Thyroid gland (tissue), 4 donors: ENCODE measurements at regions of chr2 and their contacts with region 1.

Region 1: GRCh38 chr2:69012310-69013141 is 453 bp upstream of the ANTXR1 start:
- DNase-seq: peak; percentile 65 to 75
- H3K4me3 ChIP-seq: peak overlapping the region; percentile 59 to 90 (median 82)
- H3K27ac ChIP-seq: peak overlapping the region in 2 of 3 donors; percentile 43 to 75
- H3K4me1 ChIP-seq: peaks cover 17 to 23% of the 10 kb centered on the region in 2 donors
- H3K27me3 ChIP-seq: no peaks in the 10 kb centered on the region
- CTCF ChIP-seq: peak; percentile 41 to 81 (median 68)
- POLR2A ChIP-seq: no peak

Region 2: DNA sequence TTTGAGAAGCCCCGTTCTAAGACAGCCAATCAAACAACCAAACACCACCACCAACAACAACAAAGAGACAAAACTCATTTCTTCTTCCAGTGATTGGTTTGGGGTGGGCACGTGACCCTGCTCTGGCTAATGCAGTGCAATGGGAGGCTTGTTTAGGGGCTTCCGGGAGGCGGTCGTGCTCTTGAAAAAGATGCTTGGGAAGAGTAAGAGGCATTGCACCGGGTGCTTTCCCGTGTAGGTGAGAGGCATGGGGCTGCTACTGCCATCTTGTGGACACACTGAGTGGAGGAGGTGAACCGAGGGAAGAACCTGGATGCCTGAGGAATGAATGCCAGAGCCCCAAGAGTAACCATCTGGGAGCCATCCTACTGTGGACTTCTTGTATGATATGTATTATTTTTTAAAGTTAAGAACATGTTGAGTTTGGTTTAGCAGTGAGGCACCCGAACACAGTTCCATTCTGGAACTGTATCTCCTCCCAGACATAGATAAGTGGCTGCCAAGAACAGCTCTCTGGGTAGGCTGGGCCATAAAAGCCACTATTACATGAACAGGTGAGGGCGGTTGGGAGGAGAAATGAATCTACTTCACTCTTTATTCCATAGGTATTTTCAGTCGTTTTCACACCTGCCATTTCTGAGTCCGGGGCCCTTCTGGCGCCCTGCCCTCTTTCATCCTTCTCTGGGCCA is 297.0 kb before region 1 on chr2:
- intact Hi-C with region 1: no loop called
- DNase-seq: peak; percentile 64 to 73
- H3K4me3 ChIP-seq: no peak overlapping the region
- H3K27ac ChIP-seq: no peak overlapping the region
- H3K4me1 ChIP-seq: no peaks in the 10 kb centered on the region
- H3K27me3 ChIP-seq: no peaks in the 10 kb centered on the region
- CTCF ChIP-seq: peak; percentile 22 to 80 (median 42)
- POLR2A ChIP-seq: no peak

Region 3: GRCh38 chr2:69149631-69150215 is 137.2 kb after region 1 on chr2:
- intact Hi-C with region 1: loop called (anchors 10 kb)
- DNase-seq: peak; percentile 60 to 68
- H3K4me3 ChIP-seq: no peak overlapping the region
- H3K27ac ChIP-seq: peak overlapping the region; percentile 39 to 73 (median 67)
- H3K4me1 ChIP-seq: peaks cover 5 to 34% of the 10 kb centered on the region in 2 donors
- H3K27me3 ChIP-seq: no peaks in the 10 kb centered on the region
- CTCF ChIP-seq: peak in 1 of 6 experiments; percentile 9
- POLR2A ChIP-seq: no peak